Calu3 (cell line): ENCODE measurements at regions of chr1 and their contacts with region 1.

Region 1: GRCh38 chr1:193104906-193105820 is at the start of gene GLRX2:
- DNase-seq: peak; percentile 90
- H3K4me3 Mint-ChIP-seq: peak within 1 kb of the TSS; percentile 83
- H3K27ac Mint-ChIP-seq: peak within 1 kb of the TSS; percentile 76
- H3K4me1 Mint-ChIP-seq: peaks cover 17% of the 10 kb centered on the region
- H3K27me3 Mint-ChIP-seq: no peaks in the 10 kb centered on the region
- CTCF ChIP-seq: no peak
- total RNA-seq, gene GLRX2: 25.7 and 27.4 TPM in 2 replicates

Region 2: DNA sequence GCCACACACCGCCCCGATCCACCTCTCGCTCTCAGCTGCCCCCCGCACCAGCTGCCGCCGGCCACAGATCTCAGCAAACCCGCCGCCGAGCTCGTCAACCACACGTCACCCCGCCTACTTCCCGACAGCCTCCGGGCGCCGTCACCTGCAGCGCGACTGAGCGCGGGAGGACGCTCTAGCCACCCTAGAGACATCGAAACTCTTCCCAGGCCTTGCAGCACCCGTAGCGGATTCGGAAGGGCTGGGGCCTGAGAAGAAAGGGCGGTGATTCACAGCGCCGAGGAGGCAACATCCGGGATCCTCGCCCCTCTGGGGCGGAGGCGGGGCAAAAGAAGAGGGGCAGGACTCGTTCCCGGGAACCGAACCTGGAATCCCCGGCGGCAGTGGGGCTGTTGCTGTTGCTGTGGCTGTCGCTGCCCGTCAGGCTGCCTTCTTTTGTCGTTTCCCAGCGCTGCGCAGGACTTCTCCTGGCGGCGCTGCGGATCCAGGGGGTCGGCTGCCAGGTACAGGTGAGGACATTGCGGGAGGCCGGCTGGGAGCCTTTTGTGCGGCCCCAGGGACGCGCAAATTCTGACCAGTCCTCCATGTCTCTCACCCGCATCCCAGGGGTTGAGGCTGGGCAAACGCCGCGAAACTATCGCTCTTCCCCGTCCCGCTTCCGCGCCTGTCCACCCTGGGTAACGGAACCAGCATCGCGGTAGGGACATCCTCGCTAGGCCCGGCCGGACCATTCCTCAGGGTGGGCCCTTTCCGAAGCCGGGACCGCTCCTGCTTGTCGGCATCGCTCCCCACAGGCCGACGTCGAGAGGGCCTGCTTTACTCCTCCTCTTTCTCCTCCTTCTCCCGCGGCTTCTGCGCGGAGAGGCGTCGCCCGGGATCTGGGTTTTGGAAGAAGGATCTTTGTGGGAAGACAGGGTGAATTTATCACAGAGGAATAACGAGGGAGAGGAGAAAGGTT is 45.6 kb before region 1 on chr1 and contains the starts of genes RO60 and UCHL5:
- CTCF ChIA-PET with region 1: interaction called, 3 read pairs
- intact Hi-C with region 1: loop called (anchors 5 kb)
- DNase-seq: peak; percentile 97
- H3K4me3 Mint-ChIP-seq: peak within 1 kb of the TSS; percentile 92
- H3K27ac Mint-ChIP-seq: peak within 1 kb of the TSS; percentile 90
- H3K4me1 Mint-ChIP-seq: peaks cover 25% of the 10 kb centered on the region
- H3K27me3 Mint-ChIP-seq: no peaks in the 10 kb centered on the region
- CTCF ChIP-seq: no peak
- total RNA-seq, gene RO60: 63.6 and 65.1 TPM in 2 replicates
- total RNA-seq, gene UCHL5: 69.9 and 73.7 TPM in 2 replicates